OCI-LY7 (cell line): ENCODE measurements at regions of chr9 and their contacts with region 1.

Region 1: DNA sequence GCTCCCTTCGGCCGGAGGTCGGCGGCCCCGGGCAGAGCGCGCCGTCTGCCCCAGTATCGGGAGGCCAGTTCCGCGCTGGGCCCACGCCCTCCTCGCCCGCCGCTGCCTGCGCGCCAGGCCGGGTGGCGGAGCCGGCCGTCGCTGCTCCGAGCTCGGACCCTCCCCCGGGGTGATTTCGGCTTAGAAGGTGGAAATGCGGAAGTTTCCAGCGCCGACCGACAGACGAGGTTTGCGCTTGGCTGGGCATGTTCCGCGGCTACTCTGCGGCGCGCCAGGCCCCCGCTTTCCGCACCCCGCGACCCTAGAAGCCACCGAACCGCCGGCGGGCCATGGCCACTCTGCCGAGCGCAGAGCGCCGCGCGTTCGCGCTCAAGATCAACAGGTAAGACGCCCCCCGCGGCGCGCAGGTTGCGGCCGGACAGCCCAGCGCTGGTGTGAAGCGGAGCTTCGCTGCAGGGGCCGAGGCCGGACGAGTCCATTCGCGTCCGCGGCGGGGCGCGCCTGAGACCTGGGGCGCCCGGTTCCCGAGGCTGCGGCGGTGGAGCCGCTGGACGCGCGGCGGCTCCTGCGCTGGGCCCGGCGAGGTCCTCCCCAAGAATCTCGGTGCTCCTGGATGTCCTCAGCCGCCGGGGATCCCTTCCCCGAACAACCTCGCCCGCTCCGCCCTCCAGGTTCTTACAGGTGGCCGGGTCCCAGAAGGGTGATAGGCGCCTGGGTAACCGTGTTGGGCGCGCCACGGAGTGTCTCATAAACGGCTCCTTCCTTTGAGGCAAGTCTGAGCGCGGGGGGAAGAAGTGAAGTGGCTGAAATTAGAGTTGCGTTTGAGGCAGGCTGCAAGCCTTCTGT is at the start of gene DOCK8:
- DNase-seq: peak; percentile 84
- H3K4me3 ChIP-seq: peak within 1 kb of the TSS; percentile 70
- H3K27ac ChIP-seq: no peak within 1 kb of the TSS
- H3K4me1 ChIP-seq: peaks cover 13% of the 10 kb centered on the region
- CTCF ChIP-seq: peak; percentile 67
- total RNA-seq, gene DOCK8: 59.0 and 63.7 TPM in 2 replicates

Region 2: GRCh38 chr9:272251-273213 is 57.7 kb after region 1 on chr9:
- CTCF ChIA-PET with region 1: no interaction called
- POLR2A ChIA-PET with region 1: interaction called, 14 read pairs
- intact Hi-C with region 1: loop called (anchors 1 kb)
- DNase-seq: peak; percentile 91
- H3K4me3 ChIP-seq: peak overlapping the region; percentile 74
- H3K27ac ChIP-seq: peak overlapping the region; percentile 94
- H3K4me1 ChIP-seq: peaks cover 26% of the 10 kb centered on the region
- CTCF ChIP-seq: no peak

Region 3: GRCh38 chr9:512555-513272 is 297.8 kb after region 1 on chr9:
- CTCF ChIA-PET with region 1: no interaction called
- POLR2A ChIA-PET with region 1: no interaction called
- intact Hi-C with region 1: no loop called
- DNase-seq: no peak
- H3K4me3 ChIP-seq: no peak overlapping the region
- H3K27ac ChIP-seq: no peak overlapping the region
- H3K4me1 ChIP-seq: peaks cover 9% of the 10 kb centered on the region
- CTCF ChIP-seq: no peak